CD8-positive, alpha-beta T cell (primary cell): ENCODE measurements at regions of chr4 and their contacts with region 1.

Region 1: GRCh38 chr4:38455092-38455862 is 208.7 kb upstream of the KLF3 start:
- DNase-seq: peak in 2 of 9 experiments; percentile 13 to 22
- ATAC-seq: no peak
- H3K4me3 ChIP-seq: no peak overlapping the region
- H3K4me3 Mint-ChIP-seq: no peak overlapping the region
- H3K27ac ChIP-seq: no peak overlapping the region
- H3K27ac Mint-ChIP-seq: peak overlapping the region; percentile 38
- H3K4me1 ChIP-seq: peaks cover 9% of the 10 kb centered on the region
- H3K4me1 Mint-ChIP-seq: peaks cover 16% of the 10 kb centered on the region
- H3K27me3 ChIP-seq: no peaks in the 10 kb centered on the region
- H3K27me3 Mint-ChIP-seq: no peaks in the 10 kb centered on the region
- CTCF ChIP-seq: no peak

Region 2: DNA sequence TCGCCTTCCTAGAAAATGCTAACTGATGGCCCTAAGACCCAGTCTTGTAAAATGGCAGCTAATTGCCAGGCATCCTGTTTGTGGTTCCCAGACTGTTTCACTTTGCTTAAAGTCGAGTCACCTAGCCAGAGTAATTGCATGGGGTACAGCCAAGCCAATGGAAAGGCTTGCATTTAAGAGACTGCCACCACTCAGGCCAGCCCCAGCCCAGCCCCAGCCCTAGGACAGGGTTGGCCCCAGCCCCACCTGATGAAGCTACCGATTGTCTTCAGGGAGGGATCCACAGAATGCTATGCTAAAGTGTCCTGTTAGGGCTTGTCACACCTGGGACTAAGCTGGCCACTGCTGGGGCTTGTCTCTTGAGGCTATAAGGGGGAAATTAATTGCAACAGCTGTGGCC is 14.1 kb after region 1 on chr4:
- CTCF ChIA-PET with region 1: no interaction called
- POLR2A ChIA-PET with region 1: no interaction called
- intact Hi-C with region 1: no loop called
- DNase-seq: no peak
- ATAC-seq: no peak
- H3K4me3 ChIP-seq: no peak overlapping the region
- H3K4me3 Mint-ChIP-seq: no peak overlapping the region
- H3K27ac ChIP-seq: no peak overlapping the region
- H3K27ac Mint-ChIP-seq: no peak overlapping the region
- H3K4me1 ChIP-seq: no peaks in the 10 kb centered on the region
- H3K4me1 Mint-ChIP-seq: peaks cover 7% of the 10 kb centered on the region
- H3K27me3 ChIP-seq: no peaks in the 10 kb centered on the region
- H3K27me3 Mint-ChIP-seq: no peaks in the 10 kb centered on the region
- CTCF ChIP-seq: no peak

Region 3: GRCh38 chr4:38582889-38583470 is 127.7 kb after region 1 on chr4:
- CTCF ChIA-PET with region 1: interaction called, 3 read pairs
- POLR2A ChIA-PET with region 1: no interaction called
- intact Hi-C with region 1: loop called in 1 of 2 experiments (anchors 10 kb)
- DNase-seq: peak in 3 of 9 experiments; percentile 13 to 50 (median 39)
- ATAC-seq: peak; percentile 36
- H3K4me3 ChIP-seq: no peak overlapping the region
- H3K4me3 Mint-ChIP-seq: no peak overlapping the region
- H3K27ac ChIP-seq: no peak overlapping the region
- H3K27ac Mint-ChIP-seq: no peak overlapping the region
- H3K4me1 ChIP-seq: no peaks in the 10 kb centered on the region
- H3K4me1 Mint-ChIP-seq: peaks cover 12% of the 10 kb centered on the region
- H3K27me3 ChIP-seq: peaks cover 0 to 2% of the 10 kb centered on the region in 2 experiments
- H3K27me3 Mint-ChIP-seq: no peaks in the 10 kb centered on the region
- CTCF ChIP-seq: no peak